ENCODE measurements at regions of chr22 and their contacts with region 1.

Region 1: DNA sequence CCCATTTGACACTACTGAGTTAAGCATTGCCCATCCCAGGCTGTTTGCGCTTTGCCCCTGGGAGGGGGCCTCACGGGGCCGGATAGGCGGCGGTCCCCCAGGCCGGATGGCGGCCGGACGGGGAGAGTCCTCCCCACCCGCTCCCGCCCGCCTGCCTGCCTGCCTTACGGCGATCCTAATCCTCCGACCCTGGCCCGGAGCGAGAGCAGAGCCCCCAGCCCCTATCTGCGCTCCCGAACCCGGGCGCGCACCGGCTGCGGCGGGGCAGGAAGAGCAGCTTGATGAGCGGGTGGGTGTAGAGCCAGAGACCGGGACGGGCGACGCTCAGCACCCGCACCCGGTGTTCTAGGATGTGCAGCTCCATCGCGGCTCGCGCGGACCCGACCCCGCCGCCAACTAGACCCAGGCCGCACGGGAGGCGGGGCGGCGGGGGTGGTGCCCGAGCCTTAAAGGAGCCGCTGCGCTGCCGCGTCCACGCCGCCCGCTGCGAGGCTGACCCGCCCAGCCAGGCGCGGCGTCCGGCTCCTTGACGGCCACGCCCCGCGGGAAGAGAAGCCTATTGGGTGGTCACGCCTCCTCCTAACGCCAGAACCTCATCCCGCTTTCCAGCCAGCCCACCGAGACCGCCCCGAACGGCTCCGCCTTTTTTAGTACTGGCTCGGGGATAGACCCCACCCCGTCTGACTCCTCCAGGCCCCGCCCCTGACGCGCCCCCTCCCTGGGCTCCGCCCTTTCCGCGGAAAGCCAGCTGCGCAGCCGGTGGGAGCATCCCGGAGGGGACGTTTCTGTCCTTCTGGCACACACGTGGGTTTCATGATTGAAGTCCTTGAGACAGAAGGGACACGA is at the start of gene CASTOR1:
- DNase-seq: peak; percentile 99
- ATAC-seq: peak; percentile 88
- total RNA-seq, gene CASTOR1: 7.6 TPM

Region 2: DNA sequence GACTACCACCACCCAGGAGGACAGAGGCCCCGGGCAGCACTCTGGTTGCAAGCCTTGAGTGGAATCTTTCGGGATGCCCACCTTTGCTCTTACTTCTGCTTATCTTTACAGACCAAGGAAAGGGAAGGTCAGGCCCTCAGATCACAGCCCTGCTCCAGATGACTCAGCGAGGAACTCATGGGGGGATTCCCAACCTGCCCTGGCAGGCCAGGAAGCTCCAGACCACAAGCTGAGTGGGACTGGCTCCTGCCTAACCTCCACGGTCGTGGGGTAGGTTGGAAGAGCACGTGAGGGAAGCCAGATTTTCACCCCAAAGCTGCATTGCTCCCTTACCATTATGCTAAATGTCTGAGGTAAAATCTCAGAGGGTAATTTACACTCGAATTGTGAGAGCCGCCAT is 25.6 kb after region 1 on chr22:
- intact Hi-C with region 1: no loop called
- DNase-seq: no peak
- ATAC-seq: no peak

Region 3: GRCh38 chr22:30340911-30341685 is 51.7 kb after region 1 on chr22:
- intact Hi-C with region 1: loop called (anchors 10 kb)
- DNase-seq: peak; percentile 91
- ATAC-seq: peak; percentile 90

Region 4: DNA sequence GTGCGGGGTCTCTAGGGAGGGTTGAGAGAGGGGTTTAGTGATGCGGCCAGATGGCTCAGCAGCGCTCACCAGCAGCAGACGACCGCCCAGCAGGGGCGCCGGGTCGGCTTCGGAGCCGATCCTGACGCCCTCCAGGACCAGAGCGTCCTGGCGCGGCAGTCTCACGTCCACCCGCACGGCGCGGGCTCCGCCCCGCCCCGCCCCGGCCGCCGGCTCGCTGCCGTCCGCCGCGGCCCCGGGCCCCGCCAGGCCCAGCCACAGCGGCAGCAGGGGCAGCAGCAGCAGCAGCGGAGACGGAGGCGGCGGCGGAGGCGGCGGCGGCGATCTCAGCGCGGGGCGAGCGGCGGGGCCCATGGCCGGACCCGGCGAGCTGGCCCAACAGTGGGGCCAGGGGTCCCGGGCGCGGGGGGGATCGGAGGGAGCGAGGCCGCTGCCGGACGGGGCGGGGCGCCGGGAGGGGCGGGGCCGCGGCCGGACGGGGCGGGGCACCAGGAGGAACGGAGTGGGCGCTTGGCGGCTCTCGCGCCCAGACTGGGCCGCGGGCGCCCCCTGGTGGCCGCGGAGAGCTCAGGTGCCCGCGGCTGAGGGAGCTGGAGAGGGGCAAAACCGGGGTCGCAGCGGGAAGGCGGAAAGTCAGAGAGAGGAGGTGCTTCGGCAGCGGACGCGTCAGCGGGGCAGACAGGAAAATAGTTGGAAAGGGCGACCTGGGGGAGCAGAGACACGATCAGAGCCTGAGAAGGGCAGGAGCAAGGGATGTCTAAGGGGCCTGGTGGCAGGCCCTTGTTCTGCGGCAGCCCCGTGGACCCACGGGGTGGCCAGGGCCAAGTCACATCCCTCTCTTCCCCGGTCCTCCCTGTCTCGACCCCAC is 97.8 kb after region 1 on chr22 and contains the start of gene RNF215:
- intact Hi-C with region 1: loop called (anchors 5 kb)
- DNase-seq: peak; percentile 91
- ATAC-seq: peak; percentile 96
- total RNA-seq, gene RNF215: 5.4 TPM

Measured in left ventricle myocardium superior (tissue), 1 donor.